ENCODE measurements at regions of chr17 and their contacts with region 1.

Region 1: DNA sequence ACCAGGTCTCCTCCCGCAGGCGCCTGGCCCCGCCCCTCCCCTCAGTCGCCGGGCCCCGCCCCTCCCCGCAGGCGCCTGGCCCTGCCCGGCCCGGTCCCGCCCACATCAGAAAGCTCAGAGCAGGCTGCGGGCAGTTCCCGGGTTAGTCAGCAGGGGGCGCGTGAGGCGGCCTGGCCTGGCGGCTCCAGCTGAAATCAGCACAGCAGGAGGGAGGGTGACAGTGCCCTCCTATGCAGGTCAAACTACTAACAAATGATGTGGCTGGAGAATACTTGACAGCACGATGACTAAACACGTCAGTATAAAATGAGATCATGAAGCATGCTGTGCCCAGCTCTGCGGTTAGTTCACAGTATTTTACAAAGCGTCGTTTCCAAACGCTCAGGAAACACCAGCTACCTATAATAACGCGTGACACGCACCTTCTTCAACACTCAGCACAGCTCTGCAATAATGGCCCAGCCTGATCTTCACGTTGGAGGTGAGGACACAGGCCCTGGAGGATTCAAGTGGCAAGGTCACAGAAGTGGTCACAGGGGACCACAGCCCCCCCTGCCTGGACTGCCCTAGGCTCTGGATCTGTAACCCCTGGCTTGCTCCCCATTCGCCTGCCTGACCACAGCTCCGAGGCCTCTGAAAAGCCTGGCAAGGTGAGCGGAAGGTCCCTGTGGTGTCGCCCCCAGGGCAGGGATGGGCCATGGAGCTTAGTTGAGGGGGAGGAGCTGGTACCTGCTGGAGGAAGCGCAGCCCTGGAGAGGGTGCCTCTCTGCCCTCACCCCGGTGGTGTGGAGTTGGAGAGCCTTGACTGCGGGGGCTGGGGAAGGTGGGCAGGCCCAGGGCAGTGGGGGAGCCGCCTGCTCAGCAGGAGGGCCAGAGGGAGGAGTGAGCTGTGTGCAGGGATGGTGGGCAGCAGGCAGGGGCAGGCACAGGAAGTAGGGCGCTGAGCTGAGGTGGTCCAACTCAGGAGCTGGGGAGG is 81.2 kb downstream of the KCNJ12 start:
- DNase-seq: peak; percentile 80 to 87
- ATAC-seq: peak; percentile 80 to 91
- H3K4me3 ChIP-seq: no peak overlapping the region
- H3K27ac ChIP-seq: no peak overlapping the region
- H3K4me1 ChIP-seq: peaks cover 6% of the 10 kb centered on the region; the same call in 1 of the 3 replicates
- CTCF ChIP-seq: peak; percentile 91
- EP300 ChIP-seq: no peak
- POLR2A ChIP-seq: no peak
- RAD21 ChIP-seq: peak; percentile 65 to 77

Region 2: DNA sequence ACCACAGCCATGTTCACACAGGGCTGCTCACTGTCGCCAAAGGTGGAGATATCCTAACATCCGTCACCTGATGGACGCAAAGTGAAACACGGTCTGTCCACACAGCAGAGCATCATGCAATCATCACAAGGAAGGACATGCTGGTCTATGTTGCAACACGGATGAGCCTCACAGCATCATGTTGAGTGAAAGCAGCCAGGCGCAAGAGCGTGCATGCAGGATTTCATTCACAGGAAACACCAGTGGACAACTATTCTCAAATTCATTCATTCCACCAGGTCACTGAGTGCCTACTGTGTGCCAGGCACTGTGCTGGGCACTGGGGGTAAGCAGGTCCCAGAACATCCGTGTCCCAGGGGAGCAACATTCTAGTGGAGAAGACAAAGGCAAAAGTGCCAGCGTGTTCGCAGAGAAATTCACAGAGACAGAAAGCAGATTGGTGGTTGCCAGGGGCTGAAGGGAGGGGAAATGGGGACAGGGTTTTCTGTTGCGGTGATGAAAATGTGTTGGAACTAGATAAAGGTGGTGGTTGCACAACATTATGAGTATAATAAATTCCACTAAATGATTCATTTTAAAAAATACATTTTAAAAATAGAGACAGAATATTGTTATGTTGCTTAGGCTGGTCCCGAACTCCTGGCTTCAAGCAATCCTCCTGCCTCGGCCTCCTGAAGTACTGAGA is 103.9 kb before region 1 on chr17:
- CTCF ChIA-PET with region 1: no interaction called
- POLR2A ChIA-PET with region 1: no interaction called
- DNase-seq: no peak
- ATAC-seq: no peak
- H3K4me3 ChIP-seq: no peak overlapping the region
- H3K27ac ChIP-seq: no peak overlapping the region
- H3K4me1 ChIP-seq: peaks cover 5% of the 10 kb centered on the region; the same call in 1 of the 3 replicates
- CTCF ChIP-seq: no peak
- EP300 ChIP-seq: no peak
- POLR2A ChIP-seq: no peak
- RAD21 ChIP-seq: no peak

Region 3: DNA sequence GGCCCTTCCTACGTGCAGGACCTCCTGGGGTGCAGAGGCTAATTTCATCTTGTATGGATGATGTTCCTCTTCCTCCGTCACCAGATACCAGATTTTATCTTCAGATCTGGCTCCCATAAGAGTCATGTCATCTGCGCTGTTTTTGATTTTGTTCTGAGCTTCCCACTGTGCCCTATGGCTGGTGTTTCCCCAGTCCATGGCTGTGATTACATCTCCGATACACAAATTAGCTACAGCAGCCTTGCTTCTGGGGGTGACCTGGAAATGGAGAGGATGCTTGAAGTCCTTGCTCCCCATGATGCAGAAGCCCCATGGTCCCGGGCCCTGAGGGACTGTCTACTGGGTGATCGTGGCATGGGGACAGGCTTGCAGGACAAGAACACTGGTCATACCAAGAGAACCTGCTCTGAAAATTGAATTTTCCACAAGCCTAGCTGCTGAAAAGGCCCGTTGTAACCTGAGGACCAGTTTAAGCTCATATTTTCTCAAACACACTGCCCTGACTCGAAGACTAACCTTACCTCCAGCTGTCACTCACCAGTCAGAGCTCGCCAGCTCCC is 12.2 kb before region 1 on chr17:
- CTCF ChIA-PET with region 1: interaction called, 18 read pairs
- POLR2A ChIA-PET with region 1: no interaction called
- DNase-seq: no peak
- ATAC-seq: no peak
- H3K4me3 ChIP-seq: no peak overlapping the region
- H3K27ac ChIP-seq: no peak overlapping the region
- H3K4me1 ChIP-seq: peaks cover 3% of the 10 kb centered on the region; the same call in 1 of the 3 replicates
- CTCF ChIP-seq: no peak
- EP300 ChIP-seq: no peak
- POLR2A ChIP-seq: no peak
- RAD21 ChIP-seq: no peak

Region 4: DNA sequence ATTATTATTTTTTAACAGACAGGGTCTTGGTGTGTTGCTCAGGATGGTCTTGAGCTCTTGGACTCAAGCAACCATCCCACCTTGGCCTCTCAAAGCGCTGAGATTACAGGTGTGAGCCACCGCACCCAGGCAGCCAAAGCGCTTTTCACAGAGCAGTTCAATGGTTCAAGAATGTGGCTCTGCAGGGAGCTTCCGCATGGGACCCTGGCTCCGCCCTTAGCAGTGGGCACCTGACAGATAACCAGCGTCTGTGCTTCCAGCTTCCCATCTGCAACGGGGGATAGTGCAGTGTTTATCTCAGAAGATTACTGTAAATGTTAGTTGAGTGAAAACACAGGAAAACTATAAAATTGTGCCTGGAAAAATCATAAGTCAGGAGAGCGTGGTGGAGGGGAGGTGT is 18.2 kb after region 1 on chr17:
- CTCF ChIA-PET with region 1: interaction called, 15 read pairs
- POLR2A ChIA-PET with region 1: no interaction called
- DNase-seq: no peak
- ATAC-seq: no peak
- H3K4me3 ChIP-seq: no peak overlapping the region
- H3K27ac ChIP-seq: no peak overlapping the region
- H3K4me1 ChIP-seq: no peaks in the 10 kb centered on the region
- CTCF ChIP-seq: no peak
- EP300 ChIP-seq: no peak
- POLR2A ChIP-seq: no peak
- RAD21 ChIP-seq: no peak

Measured in A549 (cell line).